GM12878 (cell line): ENCODE measurements at regions of chr2 and their contacts with region 1.

Region 1: DNA sequence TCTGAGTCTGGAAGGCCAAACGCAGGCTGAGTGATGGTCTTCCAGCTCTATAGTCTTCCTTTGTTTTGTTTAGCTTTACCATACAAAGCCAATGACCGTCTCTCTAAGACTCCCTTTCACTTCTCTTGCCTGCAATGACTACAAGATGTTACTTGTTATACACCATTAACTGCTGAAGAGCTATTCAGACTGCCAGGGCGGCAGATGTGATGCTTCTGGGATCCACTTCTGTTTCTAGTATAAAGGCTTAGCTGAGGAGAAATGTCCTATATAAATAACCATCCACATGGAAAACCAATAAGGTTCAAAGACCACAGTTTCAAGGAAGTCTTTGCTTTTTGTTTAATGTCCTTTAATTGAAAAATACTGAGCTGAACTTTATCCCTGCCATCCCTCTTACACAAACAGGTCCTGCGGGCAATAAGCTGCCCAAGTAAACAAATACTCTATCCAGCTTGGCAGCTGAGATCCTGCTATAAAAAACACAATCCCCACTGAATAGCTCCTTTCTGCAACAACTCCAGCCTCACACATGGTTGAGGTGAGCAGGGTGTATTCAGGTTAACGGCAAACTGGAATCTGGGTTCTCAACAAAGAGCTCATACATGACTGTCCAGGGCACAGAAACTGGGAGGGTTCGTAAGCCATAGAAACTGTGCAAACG is 124.6 kb downstream of the VIT start:
- DNase-seq: no peak
- ATAC-seq: no peak
- H3K4me3 ChIP-seq: no peak overlapping the region
- H3K27ac ChIP-seq: no peak overlapping the region
- H3K4me1 ChIP-seq: no peaks in the 10 kb centered on the region
- H3K27me3 ChIP-seq: peaks cover 0 to 3% of the 10 kb centered on the region in 2 experiments; a peak in 2 of 4 replicates
- CTCF ChIP-seq: no peak
- EP300 ChIP-seq: no peak
- POLR2A ChIP-seq: no peak
- RAD21 ChIP-seq: no peak

Region 2: DNA sequence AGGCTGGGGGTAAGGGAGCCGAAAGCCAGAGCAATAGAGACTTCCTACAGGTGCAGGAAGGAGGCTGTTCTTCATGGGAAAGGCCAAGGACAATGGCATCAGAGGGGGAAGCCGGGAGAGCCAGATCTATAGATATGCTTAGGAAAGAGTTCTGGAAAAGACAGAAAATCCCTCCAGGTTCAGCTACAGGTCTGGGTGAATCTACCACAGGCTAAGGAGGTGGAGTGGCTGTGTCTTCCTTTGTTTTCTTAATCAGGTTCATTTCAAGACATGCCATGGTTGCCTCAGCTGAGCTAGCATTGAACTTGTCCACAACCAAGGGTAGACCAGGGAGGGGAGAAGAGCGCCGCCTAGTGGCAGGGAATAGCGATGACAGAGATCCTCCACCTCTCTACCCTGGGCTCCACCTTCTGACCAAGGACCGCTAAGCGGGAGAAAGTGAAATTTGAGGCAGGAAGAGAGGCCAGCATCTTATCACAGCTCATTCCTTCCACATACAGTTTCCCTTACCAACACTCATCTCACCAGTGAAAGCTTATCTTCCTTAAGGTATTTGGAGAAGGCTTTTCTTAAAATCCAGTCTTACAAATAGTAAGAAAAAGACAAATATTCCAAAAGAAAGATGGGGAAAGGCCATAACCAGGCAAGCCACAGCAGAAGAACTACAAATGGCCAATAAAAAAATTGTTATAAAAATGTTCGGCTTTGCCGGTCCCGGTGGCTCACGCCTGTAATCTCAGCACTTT is 50.4 kb before region 1 on chr2:
- CTCF ChIA-PET with region 1: no interaction called
- POLR2A ChIA-PET with region 1: no interaction called
- RAD21 ChIA-PET with region 1: no interaction called
- SMC1A ChIA-PET with region 1: no interaction called
- in situ Hi-C with region 1: no loop called
- intact Hi-C with region 1: no loop called
- DNase-seq: no peak
- ATAC-seq: peak; percentile 89
- H3K4me3 ChIP-seq: no peak overlapping the region
- H3K27ac ChIP-seq: no peak overlapping the region
- H3K4me1 ChIP-seq: no peaks in the 10 kb centered on the region
- H3K27me3 ChIP-seq: no peaks in the 10 kb centered on the region; a peak in 3 of 4 replicates
- CTCF ChIP-seq: peak; percentile 54 to 74 (median 59)
- EP300 ChIP-seq: no peak
- POLR2A ChIP-seq: no peak
- RAD21 ChIP-seq: peak; percentile 21; the same call in 1 of the 2 replicates

Region 3: DNA sequence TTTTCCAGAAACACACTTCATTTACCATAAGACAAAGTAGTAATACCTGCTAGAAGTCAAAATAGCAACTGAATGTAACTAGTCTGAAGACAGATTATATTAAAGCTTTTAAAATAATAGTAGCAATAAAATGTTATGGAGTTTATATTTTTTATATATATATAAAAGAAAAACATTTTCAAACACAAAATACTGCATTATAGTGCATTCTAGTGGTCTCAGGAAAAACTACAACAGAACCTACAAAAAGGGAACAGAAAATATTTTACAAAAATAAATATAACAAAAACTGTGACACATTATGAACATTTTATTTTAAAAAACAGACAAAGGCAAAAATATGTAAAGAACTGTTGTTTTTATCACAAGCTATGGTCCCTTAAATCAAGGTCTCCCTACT is 97.2 kb after region 1 on chr2:
- CTCF ChIA-PET with region 1: interaction called, 36 read pairs
- POLR2A ChIA-PET with region 1: no interaction called
- RAD21 ChIA-PET with region 1: interaction called, 9 read pairs
- SMC1A ChIA-PET with region 1: interaction called, 15 read pairs
- in situ Hi-C with region 1: no loop called
- intact Hi-C with region 1: no loop called
- DNase-seq: no peak
- ATAC-seq: no peak
- H3K4me3 ChIP-seq: no peak overlapping the region
- H3K27ac ChIP-seq: no peak overlapping the region
- H3K4me1 ChIP-seq: no peaks in the 10 kb centered on the region; the same call in 1 of the 2 replicates
- H3K27me3 ChIP-seq: no peaks in the 10 kb centered on the region
- CTCF ChIP-seq: peak in 2 of 3 experiments; percentile 13 to 22; a peak in 2 of 6 replicates
- EP300 ChIP-seq: no peak
- POLR2A ChIP-seq: no peak
- RAD21 ChIP-seq: peak; percentile 21; the same call in 1 of the 2 replicates

Region 4: DNA sequence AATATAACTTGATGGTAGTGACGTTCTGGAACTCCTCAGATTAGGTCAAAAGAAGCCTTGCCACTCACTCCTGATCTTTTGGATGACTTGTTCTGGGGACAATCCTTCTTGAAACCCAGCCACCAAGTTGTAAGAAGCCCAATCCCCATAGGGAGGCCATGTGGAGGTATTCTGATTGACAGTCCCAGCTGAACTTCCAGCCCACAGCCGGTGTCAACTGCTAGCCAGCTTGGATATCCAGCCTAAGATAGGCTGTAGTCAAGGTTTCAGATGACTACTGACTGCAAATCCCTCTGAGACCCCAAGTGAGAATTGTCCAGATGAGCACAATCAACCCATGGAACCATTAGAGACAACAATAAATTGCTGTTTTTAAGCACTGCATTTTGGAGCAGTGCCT is 304.3 kb after region 1 on chr2:
- CTCF ChIA-PET with region 1: no interaction called
- POLR2A ChIA-PET with region 1: no interaction called
- RAD21 ChIA-PET with region 1: no interaction called
- SMC1A ChIA-PET with region 1: no interaction called
- in situ Hi-C with region 1: no loop called
- intact Hi-C with region 1: no loop called
- DNase-seq: no peak
- ATAC-seq: no peak
- H3K4me3 ChIP-seq: no peak overlapping the region
- H3K27ac ChIP-seq: no peak overlapping the region
- H3K4me1 ChIP-seq: no peaks in the 10 kb centered on the region
- H3K27me3 ChIP-seq: no peaks in the 10 kb centered on the region
- CTCF ChIP-seq: no peak
- EP300 ChIP-seq: no peak
- POLR2A ChIP-seq: no peak
- RAD21 ChIP-seq: no peak